ENCODE measurements at regions of chr2 and their contacts with region 1.

Region 1: GRCh38 chr2:234257856-234258561 is 207.5 kb downstream of the SPP2 start:
- DNase-seq: peak; percentile 99
- H3K4me3 ChIP-seq: no peak overlapping the region
- H3K27ac ChIP-seq: peak overlapping the region; percentile 99
- H3K4me1 ChIP-seq: peaks cover 76% of the 10 kb centered on the region
- H3K27me3 ChIP-seq: no peaks in the 10 kb centered on the region
- CTCF ChIP-seq: peak; percentile 82 to 83

Region 2: DNA sequence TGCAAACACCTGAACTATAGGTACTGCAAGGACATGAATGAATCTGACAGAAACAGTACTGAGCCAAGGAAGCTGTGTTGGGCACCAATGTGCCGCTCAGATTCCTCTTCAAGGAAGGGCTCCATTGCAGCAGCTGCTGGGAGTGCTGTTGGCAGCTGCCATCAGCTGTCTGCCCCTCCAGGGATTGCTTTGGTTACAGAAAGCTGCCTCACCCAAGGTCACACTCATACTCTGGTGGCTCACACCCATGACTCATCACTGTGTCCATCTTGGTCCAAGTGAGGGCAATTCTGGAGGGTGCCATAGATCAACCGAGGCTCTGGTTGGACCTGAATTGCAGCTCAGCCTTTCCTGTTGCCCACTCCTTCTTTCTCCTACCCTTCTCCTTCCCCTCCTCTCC is 365.2 kb before region 1 on chr2:
- CTCF ChIA-PET with region 1: no interaction called
- dilution Hi-C with region 1: no loop called
- in situ Hi-C with region 1: no loop called
- intact Hi-C with region 1: no loop called
- DNase-seq: no peak
- H3K4me3 ChIP-seq: no peak overlapping the region
- H3K27ac ChIP-seq: no peak overlapping the region
- H3K4me1 ChIP-seq: no peaks in the 10 kb centered on the region
- H3K27me3 ChIP-seq: peaks cover 2% of the 10 kb centered on the region
- CTCF ChIP-seq: no peak

Region 3: GRCh38 chr2:234203135-234203984 is 54.6 kb before region 1 on chr2:
- CTCF ChIA-PET with region 1: no interaction called
- dilution Hi-C with region 1: no loop called
- in situ Hi-C with region 1: no loop called
- intact Hi-C with region 1: loop called (anchors 1 kb)
- DNase-seq: peak; percentile 99
- H3K4me3 ChIP-seq: no peak overlapping the region
- H3K27ac ChIP-seq: peak overlapping the region; percentile 67
- H3K4me1 ChIP-seq: peaks cover 16% of the 10 kb centered on the region
- H3K27me3 ChIP-seq: no peaks in the 10 kb centered on the region
- CTCF ChIP-seq: no peak

Region 4: GRCh38 chr2:234288974-234289455 is 31.0 kb after region 1 on chr2:
- CTCF ChIA-PET with region 1: no interaction called
- dilution Hi-C with region 1: no loop called
- in situ Hi-C with region 1: no loop called
- intact Hi-C with region 1: loop called (anchors 2 kb)
- DNase-seq: peak; percentile 24
- H3K4me3 ChIP-seq: no peak overlapping the region
- H3K27ac ChIP-seq: no peak overlapping the region
- H3K4me1 ChIP-seq: peaks cover 32% of the 10 kb centered on the region
- H3K27me3 ChIP-seq: no peaks in the 10 kb centered on the region
- CTCF ChIP-seq: peak; percentile 61 to 78

Region 5: DNA sequence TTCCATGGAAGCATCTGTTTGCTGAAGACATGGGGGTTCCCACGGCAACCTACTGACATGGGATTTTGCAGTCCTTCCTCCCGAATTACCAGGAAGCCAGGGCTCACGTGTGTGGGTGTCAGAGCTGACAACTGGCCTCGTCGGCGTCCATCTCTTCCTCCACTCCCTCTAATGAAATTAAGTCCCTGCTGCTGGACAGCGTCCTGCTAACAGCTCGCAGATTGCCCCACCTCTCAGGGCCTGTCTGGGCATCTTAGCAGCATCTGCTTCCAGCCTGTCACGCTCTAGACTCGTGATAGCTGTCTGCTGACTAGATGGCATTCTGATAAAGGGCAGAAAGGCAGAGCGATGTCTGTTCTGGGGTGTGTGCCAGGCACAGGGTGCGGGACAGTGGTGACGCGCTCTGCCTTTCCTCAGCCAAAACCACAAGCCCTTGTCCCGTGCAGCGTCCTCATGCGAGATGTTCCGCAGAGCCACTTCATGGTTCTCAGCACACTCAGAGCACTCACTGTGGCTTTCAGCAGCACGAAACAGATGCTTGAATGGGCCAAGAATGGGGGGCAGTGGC is 77.7 kb after region 1 on chr2:
- CTCF ChIA-PET with region 1: no interaction called
- dilution Hi-C with region 1: no loop called
- in situ Hi-C with region 1: no loop called
- intact Hi-C with region 1: loop called (anchors 1 kb)
- DNase-seq: peak; percentile 84
- H3K4me3 ChIP-seq: no peak overlapping the region
- H3K27ac ChIP-seq: no peak overlapping the region
- H3K4me1 ChIP-seq: peaks cover 11% of the 10 kb centered on the region
- H3K27me3 ChIP-seq: no peaks in the 10 kb centered on the region
- CTCF ChIP-seq: no peak

Measured in mammary epithelial cell (primary cell).